CD4-positive, alpha-beta T cell (primary cell): ENCODE measurements at regions of chr13 and their contacts with region 1.

Region 1: DNA sequence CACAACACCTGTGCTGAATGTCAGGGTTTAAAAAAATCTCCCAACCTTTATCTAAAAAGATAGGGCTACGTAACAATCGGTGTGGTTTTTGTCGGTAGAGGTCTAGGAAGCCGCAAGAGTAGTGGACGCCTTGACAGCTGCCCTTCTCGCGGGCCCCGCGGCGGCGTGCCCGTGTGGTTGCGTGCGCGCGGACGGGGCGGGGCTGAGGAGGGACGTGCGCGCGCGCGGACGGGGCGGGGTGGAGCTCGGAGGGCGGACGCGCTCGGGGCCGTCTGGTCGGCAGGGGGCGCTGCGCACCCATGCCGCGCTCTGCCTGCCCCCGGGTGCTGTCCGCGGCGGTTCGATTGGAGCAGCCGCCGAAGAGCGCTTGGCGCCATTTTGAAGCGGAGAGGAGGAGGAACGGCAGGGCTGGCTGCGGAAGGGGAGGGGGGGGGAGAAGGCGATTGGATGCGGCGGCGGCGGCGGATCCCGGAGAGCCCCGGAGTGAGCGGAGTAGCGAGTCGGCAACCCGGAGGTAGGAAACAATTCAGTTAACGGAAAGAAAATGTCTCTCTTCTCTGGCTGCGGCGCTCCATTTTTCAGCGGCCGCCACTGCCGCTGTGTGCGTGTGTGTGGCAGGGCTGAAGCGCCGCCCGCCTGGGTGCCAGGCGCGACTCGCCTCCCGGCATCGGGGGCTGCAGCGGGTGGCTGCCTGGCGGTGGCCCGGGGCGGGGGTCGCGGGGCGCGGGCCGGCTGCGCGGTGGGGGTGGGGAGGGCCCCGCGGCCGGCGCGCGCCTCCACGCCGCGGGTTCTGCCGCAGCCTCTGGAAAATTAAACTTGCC is at the start of gene PDS5B:
- DNase-seq: peak; percentile 87 to 99 (median 94)
- ATAC-seq: peak; percentile 91
- H3K4me3 ChIP-seq: peak within 1 kb of the TSS; percentile 85
- H3K4me3 Mint-ChIP-seq: peak within 1 kb of the TSS; percentile 97
- H3K27ac ChIP-seq: peak within 1 kb of the TSS; percentile 55 to 69
- H3K27ac Mint-ChIP-seq: peak within 1 kb of the TSS; percentile 93
- H3K4me1 ChIP-seq: peaks cover 12% of the 10 kb centered on the region
- H3K4me1 Mint-ChIP-seq: peaks cover 42% of the 10 kb centered on the region
- H3K27me3 ChIP-seq: no peaks in the 10 kb centered on the region
- H3K27me3 Mint-ChIP-seq: no peaks in the 10 kb centered on the region
- CTCF ChIP-seq: peak; percentile 55
- total RNA-seq, gene PDS5B: 39.8 to 40.6 TPM

Region 2: DNA sequence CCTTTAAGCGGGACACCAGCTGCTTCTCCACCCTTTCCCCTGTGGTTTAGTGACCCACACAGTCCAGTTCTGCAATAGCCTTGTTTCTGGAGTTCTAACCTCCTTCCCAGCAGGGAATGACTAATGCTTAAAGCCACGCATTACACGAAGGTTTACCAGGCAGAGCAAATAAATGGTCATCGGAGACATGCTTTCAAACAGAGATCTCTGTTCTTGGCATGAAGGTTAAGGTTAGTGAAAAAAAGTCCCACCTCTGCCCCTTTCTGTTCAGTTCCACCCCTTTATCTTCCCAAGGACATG is 1705.5 kb before region 1 on chr13:
- CTCF ChIA-PET with region 1: no interaction called
- POLR2A ChIA-PET with region 1: no interaction called
- intact Hi-C with region 1: no loop called
- DNase-seq: no peak
- ATAC-seq: no peak
- H3K4me3 ChIP-seq: no peak overlapping the region
- H3K4me3 Mint-ChIP-seq: no peak overlapping the region
- H3K27ac ChIP-seq: no peak overlapping the region
- H3K27ac Mint-ChIP-seq: no peak overlapping the region
- H3K4me1 ChIP-seq: no peaks in the 10 kb centered on the region
- H3K4me1 Mint-ChIP-seq: no peaks in the 10 kb centered on the region
- H3K27me3 ChIP-seq: peaks cover 3% of the 10 kb centered on the region in 2 experiments
- H3K27me3 Mint-ChIP-seq: peaks cover 32% of the 10 kb centered on the region
- CTCF ChIP-seq: no peak

Region 3: GRCh38 chr13:31670831-31671617 is 915.3 kb before region 1 on chr13:
- CTCF ChIA-PET with region 1: no interaction called
- POLR2A ChIA-PET with region 1: no interaction called
- intact Hi-C with region 1: no loop called
- DNase-seq: no peak
- ATAC-seq: no peak
- H3K4me3 ChIP-seq: no peak overlapping the region
- H3K4me3 Mint-ChIP-seq: no peak overlapping the region
- H3K27ac ChIP-seq: no peak overlapping the region
- H3K27ac Mint-ChIP-seq: no peak overlapping the region
- H3K4me1 ChIP-seq: no peaks in the 10 kb centered on the region
- H3K4me1 Mint-ChIP-seq: no peaks in the 10 kb centered on the region
- H3K27me3 ChIP-seq: no peaks in the 10 kb centered on the region
- H3K27me3 Mint-ChIP-seq: peaks cover 8% of the 10 kb centered on the region
- CTCF ChIP-seq: no peak

Region 4: DNA sequence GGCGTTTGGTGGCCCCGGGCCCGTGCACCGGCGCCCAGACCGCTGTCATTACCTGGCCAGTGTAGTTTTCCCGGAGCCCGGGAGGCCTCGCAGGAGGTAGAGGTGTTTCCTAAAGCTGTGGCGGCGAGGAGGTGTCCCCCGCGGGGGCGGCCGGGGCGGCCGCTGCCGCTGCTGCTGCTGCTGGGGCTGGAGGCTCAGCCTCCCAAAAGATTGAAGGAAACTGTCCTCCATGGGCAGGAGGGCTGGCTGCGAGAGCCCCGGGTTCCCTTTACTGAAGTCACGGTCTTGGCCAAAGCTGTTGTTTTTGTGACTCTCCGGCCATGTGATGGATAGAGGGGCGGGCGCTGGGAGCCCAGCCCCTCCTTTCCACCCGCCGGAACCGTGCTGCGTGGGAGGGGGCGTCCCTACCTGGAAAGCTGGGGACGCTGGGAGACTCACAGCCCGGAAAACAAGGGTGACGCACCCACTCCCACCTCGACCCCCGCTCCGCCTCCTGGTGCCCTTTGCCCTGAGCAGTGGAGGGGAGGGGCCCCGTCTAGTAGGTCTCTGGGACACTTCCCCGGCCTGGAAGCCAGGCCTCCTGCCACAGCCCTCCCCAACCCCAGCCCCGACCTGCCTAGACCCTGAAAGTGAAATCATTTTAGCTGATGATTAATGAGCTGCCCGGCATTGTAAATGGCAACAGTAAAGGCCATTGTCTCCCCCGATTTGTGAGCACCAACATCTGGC is 158.3 kb before region 1 on chr13 and contains the start of gene N4BP2L1:
- CTCF ChIA-PET with region 1: interaction called, 4 read pairs
- POLR2A ChIA-PET with region 1: interaction called, 9 read pairs
- intact Hi-C with region 1: loop called in 1 of 2 experiments (anchors 5 kb)
- DNase-seq: peak; percentile 58 to 94 (median 78)
- ATAC-seq: peak; percentile 73
- H3K4me3 ChIP-seq: peak within 1 kb of the TSS; percentile 79
- H3K4me3 Mint-ChIP-seq: peak within 1 kb of the TSS; percentile 96
- H3K27ac ChIP-seq: peak within 1 kb of the TSS; percentile 91 to 94
- H3K27ac Mint-ChIP-seq: peak within 1 kb of the TSS; percentile 96
- H3K4me1 ChIP-seq: peaks cover 40% of the 10 kb centered on the region
- H3K4me1 Mint-ChIP-seq: peaks cover 45% of the 10 kb centered on the region
- H3K27me3 ChIP-seq: no peaks in the 10 kb centered on the region
- H3K27me3 Mint-ChIP-seq: no peaks in the 10 kb centered on the region
- CTCF ChIP-seq: no peak
- total RNA-seq, gene N4BP2L1: 47.5 to 50.5 TPM

Region 5: DNA sequence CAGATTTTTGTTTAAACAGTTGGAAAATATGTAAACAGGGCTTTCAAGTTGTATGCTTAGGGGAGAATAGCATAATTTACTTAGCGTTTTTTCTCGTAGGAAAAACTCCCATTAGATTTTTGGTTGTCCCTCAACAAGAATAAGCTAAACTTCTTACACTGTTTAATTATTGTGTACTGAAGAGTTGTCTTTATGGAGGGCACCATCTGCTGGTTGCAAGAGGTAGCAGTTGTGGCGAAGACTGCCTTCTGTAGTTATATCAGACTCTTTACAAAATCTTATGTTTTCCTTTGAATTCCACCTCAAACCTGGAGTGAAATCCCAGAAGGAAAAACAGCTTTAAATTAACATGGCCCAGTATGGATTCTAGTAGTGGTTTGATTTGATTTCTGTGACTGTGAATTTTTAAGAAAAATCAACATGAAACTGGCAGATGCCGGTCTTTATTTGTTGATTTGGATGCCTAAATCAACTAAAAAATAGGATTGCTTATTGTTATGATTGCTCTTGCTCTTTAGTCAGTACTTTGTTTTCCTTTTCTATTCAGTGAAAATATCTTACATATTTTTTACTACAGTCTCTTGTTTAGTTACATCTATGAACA is 53.3 kb after region 1 on chr13:
- CTCF ChIA-PET with region 1: interaction called, 111 read pairs
- POLR2A ChIA-PET with region 1: interaction called, 7 read pairs
- intact Hi-C with region 1: loop called (anchors 1 kb)
- DNase-seq: peak; percentile 22 to 82 (median 36)
- ATAC-seq: peak; percentile 98
- H3K4me3 ChIP-seq: no peak overlapping the region
- H3K4me3 Mint-ChIP-seq: no peak overlapping the region
- H3K27ac ChIP-seq: no peak overlapping the region
- H3K27ac Mint-ChIP-seq: no peak overlapping the region
- H3K4me1 ChIP-seq: no peaks in the 10 kb centered on the region
- H3K4me1 Mint-ChIP-seq: peaks cover 35% of the 10 kb centered on the region
- H3K27me3 ChIP-seq: no peaks in the 10 kb centered on the region
- H3K27me3 Mint-ChIP-seq: no peaks in the 10 kb centered on the region
- CTCF ChIP-seq: peak; percentile 88

Region 6: DNA sequence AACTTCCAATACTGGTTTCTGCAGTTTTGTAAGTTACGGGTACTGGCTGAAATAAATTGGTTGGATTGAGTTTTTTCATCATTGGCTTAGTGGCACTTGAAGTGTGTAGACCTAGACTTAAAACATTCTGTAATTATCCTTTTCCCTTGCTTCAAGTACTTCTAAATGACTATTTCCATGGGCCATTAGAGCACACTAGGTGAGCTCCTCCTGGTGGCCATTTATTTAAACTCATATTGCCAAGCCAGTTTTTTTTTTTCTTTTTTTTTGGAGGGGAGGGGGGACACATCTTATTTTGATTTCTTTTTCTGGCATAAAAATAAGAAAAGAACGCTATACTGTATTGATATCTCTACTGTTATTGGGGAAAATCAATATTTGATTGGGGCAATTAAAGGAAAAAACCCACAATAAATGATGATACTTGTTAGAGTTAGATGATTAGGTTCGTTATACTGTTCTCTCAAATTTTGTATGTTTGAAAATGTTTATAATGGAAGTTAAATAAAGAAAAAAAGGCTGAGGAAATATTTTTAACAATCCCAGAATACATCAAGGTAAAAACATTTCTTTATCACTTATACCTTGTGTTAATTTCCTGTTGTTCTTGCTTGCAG is 82.8 kb after region 1 on chr13:
- CTCF ChIA-PET with region 1: interaction called, 41 read pairs
- POLR2A ChIA-PET with region 1: interaction called, 4 read pairs
- intact Hi-C with region 1: loop called in 1 of 2 experiments (anchors 1 kb)
- DNase-seq: peak in 4 of 14 experiments; percentile 10 to 72 (median 62)
- ATAC-seq: peak; percentile 68
- H3K4me3 ChIP-seq: no peak overlapping the region
- H3K4me3 Mint-ChIP-seq: no peak overlapping the region
- H3K27ac ChIP-seq: no peak overlapping the region
- H3K27ac Mint-ChIP-seq: no peak overlapping the region
- H3K4me1 ChIP-seq: no peaks in the 10 kb centered on the region
- H3K4me1 Mint-ChIP-seq: peaks cover 10% of the 10 kb centered on the region
- H3K27me3 ChIP-seq: no peaks in the 10 kb centered on the region
- H3K27me3 Mint-ChIP-seq: no peaks in the 10 kb centered on the region
- CTCF ChIP-seq: peak; percentile 71

Region 7: DNA sequence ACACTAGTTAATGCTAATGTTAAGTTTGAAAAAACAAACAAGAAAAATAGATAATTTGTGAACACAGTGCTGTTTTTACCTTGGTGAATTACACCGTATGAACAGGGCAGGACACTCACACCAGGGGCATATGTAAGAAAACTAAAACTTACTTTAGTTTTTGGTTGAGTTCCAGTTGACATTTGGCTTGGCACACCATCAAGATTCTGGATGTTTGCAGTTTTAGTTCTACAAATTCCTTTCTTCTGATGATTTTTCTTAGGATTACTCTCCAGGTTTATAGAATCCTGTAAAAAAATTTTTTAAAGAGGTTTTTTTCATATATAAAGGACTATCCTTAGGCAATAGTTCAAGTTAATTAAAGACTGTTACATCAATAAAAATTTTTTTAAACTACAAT is 937.8 kb after region 1 on chr13:
- CTCF ChIA-PET with region 1: no interaction called
- POLR2A ChIA-PET with region 1: no interaction called
- intact Hi-C with region 1: no loop called
- DNase-seq: no peak
- ATAC-seq: no peak
- H3K4me3 ChIP-seq: no peak overlapping the region
- H3K4me3 Mint-ChIP-seq: no peak overlapping the region
- H3K27ac ChIP-seq: no peak overlapping the region
- H3K27ac Mint-ChIP-seq: no peak overlapping the region
- H3K4me1 ChIP-seq: no peaks in the 10 kb centered on the region
- H3K4me1 Mint-ChIP-seq: peaks cover 11% of the 10 kb centered on the region
- H3K27me3 ChIP-seq: no peaks in the 10 kb centered on the region
- H3K27me3 Mint-ChIP-seq: peaks cover 5% of the 10 kb centered on the region
- CTCF ChIP-seq: no peak

Region 8: GRCh38 chr13:33542283-33543088 is 956.2 kb after region 1 on chr13:
- CTCF ChIA-PET with region 1: interaction called, 12 read pairs
- POLR2A ChIA-PET with region 1: interaction called, 21 read pairs
- intact Hi-C with region 1: loop called (anchors 1 to 2 kb)
- DNase-seq: peak; percentile 95 to 100 (median 98)
- ATAC-seq: peak; percentile 79
- H3K4me3 ChIP-seq: peak overlapping the region; percentile 69
- H3K4me3 Mint-ChIP-seq: peak overlapping the region; percentile 99
- H3K27ac ChIP-seq: peak overlapping the region; percentile 97 to 98
- H3K27ac Mint-ChIP-seq: peak overlapping the region; percentile 98
- H3K4me1 ChIP-seq: peaks cover 31% of the 10 kb centered on the region
- H3K4me1 Mint-ChIP-seq: peaks cover 56% of the 10 kb centered on the region
- H3K27me3 ChIP-seq: no peaks in the 10 kb centered on the region
- H3K27me3 Mint-ChIP-seq: no peaks in the 10 kb centered on the region
- CTCF ChIP-seq: peak; percentile 84

Region 9: GRCh38 chr13:33817901-33818706 is 1231.8 kb after region 1 on chr13 and contains the start of gene RFC3:
- CTCF ChIA-PET with region 1: no interaction called
- POLR2A ChIA-PET with region 1: no interaction called
- intact Hi-C with region 1: loop called (anchors 5 to 10 kb)
- DNase-seq: peak; percentile 81 to 95 (median 85)
- ATAC-seq: peak; percentile 89
- H3K4me3 ChIP-seq: peak within 1 kb of the TSS; percentile 78
- H3K4me3 Mint-ChIP-seq: peak within 1 kb of the TSS; percentile 95
- H3K27ac ChIP-seq: peak within 1 kb of the TSS; percentile 37 to 57
- H3K27ac Mint-ChIP-seq: peak within 1 kb of the TSS; percentile 86
- H3K4me1 ChIP-seq: peaks cover 9% of the 10 kb centered on the region
- H3K4me1 Mint-ChIP-seq: peaks cover 14% of the 10 kb centered on the region
- H3K27me3 ChIP-seq: no peaks in the 10 kb centered on the region
- H3K27me3 Mint-ChIP-seq: no peaks in the 10 kb centered on the region
- CTCF ChIP-seq: no peak
- total RNA-seq, gene RFC3: 4.5 TPM